Psoas muscle (tissue), 8 donors: ENCODE measurements at regions of chr1 and their contacts with region 1.

Region 1: DNA sequence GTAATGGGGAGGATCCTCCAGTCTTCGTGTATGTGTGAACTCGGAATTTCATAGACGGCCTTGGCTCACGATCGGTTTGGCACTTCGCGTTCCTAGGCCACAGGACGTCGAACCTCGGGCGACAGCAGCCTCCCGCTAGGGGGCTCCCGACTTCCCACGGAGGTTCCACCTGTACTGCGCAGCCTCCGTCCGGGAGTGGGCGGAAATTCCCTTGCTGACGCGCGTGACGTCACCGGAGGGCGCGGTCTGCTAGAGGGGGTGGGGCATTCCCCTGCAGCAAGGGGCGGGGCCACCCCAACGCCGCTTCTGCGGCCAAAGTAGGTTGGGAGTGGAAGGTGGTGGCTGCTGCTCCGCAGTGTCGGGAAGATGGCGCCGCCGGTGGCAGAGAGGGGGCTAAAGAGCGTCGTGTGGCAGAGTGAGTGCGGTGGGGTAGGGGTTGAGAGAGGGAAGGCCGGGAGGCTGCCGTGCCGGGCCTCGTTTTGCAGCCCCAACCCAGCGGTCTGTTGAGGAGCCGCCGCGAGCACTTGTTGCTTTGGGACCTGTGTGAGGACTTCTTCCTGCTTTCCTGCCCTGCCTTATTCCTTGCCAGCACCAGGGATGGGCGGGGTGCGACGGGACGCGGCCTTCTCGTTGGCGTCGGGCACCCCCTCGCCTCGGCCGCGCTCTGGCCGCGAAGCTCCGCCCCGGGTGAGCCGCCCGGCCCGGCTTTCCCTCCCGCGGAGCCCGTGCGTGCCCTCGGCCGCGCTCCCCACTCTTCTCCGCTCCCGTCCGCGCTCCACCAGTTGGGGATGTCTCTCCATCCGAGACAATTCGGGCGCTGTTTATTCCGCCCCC is at the start of gene STXBP3:
- DNase-seq: peak; percentile 99 to 100
- ATAC-seq: peak; percentile 96 to 97 (median 97)
- H3K4me3 ChIP-seq: peak within 1 kb of the TSS; percentile 86
- H3K27ac ChIP-seq: peak within 1 kb of the TSS; percentile 96
- H3K4me1 ChIP-seq: peaks cover 4% of the 10 kb centered on the region
- H3K27me3 ChIP-seq: no peaks in the 10 kb centered on the region
- CTCF ChIP-seq: peak; percentile 91
- total RNA-seq, gene STXBP3: 13.6 to 22.3 (median 17.7) TPM

Region 2: DNA sequence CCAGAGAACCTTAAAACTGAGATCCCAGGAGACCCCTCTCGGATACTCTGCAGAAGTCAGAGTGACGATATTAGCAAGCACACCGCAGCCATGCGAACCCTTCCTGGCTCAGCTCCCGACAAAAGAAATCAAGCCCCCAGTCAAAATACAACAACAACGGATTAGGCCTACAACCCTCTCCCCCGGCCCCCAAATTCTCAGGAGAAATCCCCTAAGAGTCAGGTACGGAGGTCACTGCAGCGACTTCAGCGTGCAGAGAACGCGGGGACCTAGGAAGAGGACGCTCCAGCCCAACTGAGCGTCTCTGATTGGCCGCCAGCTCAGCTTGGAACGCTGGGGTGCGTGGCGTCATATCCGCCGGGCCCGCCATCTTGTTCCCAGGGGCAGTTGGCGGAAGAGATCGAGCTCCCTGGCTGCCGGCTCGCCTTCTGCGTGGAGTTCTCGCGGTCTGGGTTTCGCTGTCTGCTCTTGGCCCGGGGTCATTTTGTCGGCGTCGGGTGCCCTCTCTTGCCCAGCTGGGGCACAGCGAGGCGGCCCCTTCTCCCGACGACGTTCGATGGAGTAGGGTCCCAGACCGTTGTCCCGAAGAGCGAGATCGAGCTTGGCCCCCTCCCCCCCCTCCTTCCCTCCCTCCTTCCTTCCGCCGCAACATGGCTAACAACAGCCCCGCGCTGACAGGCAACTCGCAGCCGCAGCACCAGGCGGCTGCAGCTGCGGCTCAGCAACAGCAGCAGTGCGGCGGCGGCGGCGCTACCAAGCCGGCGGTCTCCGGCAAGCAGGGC is 54.5 kb before region 1 on chr1 and contains the start of gene PRPF38B:
- intact Hi-C with region 1: loop called (anchors 2 to 5 kb)
- DNase-seq: peak; percentile 94 to 96
- ATAC-seq: peak; percentile 97 to 98 (median 98)
- H3K4me3 ChIP-seq: peak within 1 kb of the TSS; percentile 85
- H3K27ac ChIP-seq: peak within 1 kb of the TSS; percentile 99
- H3K4me1 ChIP-seq: peaks cover 30% of the 10 kb centered on the region
- H3K27me3 ChIP-seq: no peaks in the 10 kb centered on the region
- CTCF ChIP-seq: no peak
- total RNA-seq, gene PRPF38B: 13.3 to 19.6 (median 16.5) TPM

Region 3: GRCh38 chr1:108814343-108815125 is 67.9 kb after region 1 on chr1:
- intact Hi-C with region 1: loop called in 1 of 2 experiments (anchors 5 kb)
- DNase-seq: no peak
- ATAC-seq: peak in 2 of 4 donors; percentile 22 to 40
- H3K4me3 ChIP-seq: no peak overlapping the region
- H3K27ac ChIP-seq: peak overlapping the region; percentile 21
- H3K4me1 ChIP-seq: peaks cover 12% of the 10 kb centered on the region
- H3K27me3 ChIP-seq: no peaks in the 10 kb centered on the region
- CTCF ChIP-seq: no peak

Region 4: GRCh38 chr1:108925920-108926319 is 179.3 kb after region 1 on chr1:
- intact Hi-C with region 1: loop called in 1 of 2 experiments (anchors 10 kb)
- DNase-seq: no peak
- ATAC-seq: no peak
- H3K4me3 ChIP-seq: no peak overlapping the region
- H3K27ac ChIP-seq: no peak overlapping the region
- H3K4me1 ChIP-seq: no peaks in the 10 kb centered on the region
- H3K27me3 ChIP-seq: no peaks in the 10 kb centered on the region
- CTCF ChIP-seq: no peak